ENCODE measurements at regions of chr5 and their contacts with region 1.

Region 1: GRCh38 chr5:9622971-9623421 is 7.2 kb downstream of the TAS2R1 start:
- DNase-seq: no peak
- H3K4me3 ChIP-seq: no peak overlapping the region
- H3K27ac ChIP-seq: no peak overlapping the region
- H3K4me1 ChIP-seq: no peaks in the 10 kb centered on the region
- H3K27me3 ChIP-seq: no peaks in the 10 kb centered on the region
- CTCF ChIP-seq: no peak
- POLR2A ChIP-seq: no peak

Region 2: DNA sequence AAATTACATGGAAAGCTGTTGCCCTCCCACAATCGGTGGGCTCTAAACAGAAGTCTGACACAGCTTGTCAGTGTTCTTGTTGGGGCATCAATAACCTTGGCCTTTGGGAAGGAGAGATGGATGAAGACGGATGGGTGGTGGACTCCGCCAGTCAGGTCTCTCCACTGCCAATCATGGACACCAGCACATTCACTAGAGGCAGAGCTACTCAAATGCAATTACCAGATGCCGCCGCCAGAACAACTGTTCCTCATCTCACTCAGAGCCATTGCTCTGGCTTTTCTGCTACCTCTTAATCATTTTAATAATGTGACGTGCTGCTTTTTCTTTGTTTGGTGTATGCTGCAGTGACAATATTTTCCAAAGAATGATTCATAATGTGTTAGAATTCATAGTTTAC is 49.2 kb before region 1 on chr5:
- intact Hi-C with region 1: no loop called
- DNase-seq: no peak
- H3K4me3 ChIP-seq: no peak overlapping the region
- H3K27ac ChIP-seq: no peak overlapping the region
- H3K4me1 ChIP-seq: no peaks in the 10 kb centered on the region
- H3K27me3 ChIP-seq: no peaks in the 10 kb centered on the region
- CTCF ChIP-seq: no peak
- POLR2A ChIP-seq: no peak

Region 3: GRCh38 chr5:9898319-9898718 is 275.3 kb after region 1 on chr5:
- intact Hi-C with region 1: loop called (anchors 10 kb)
- DNase-seq: no peak
- H3K4me3 ChIP-seq: no peak overlapping the region
- H3K27ac ChIP-seq: no peak overlapping the region
- H3K4me1 ChIP-seq: no peaks in the 10 kb centered on the region
- H3K27me3 ChIP-seq: no peaks in the 10 kb centered on the region
- CTCF ChIP-seq: no peak
- POLR2A ChIP-seq: no peak

Measured in breast epithelium (tissue), 4 donors.